ENCODE measurements at regions of chr13 and their contacts with region 1.

Region 1: DNA sequence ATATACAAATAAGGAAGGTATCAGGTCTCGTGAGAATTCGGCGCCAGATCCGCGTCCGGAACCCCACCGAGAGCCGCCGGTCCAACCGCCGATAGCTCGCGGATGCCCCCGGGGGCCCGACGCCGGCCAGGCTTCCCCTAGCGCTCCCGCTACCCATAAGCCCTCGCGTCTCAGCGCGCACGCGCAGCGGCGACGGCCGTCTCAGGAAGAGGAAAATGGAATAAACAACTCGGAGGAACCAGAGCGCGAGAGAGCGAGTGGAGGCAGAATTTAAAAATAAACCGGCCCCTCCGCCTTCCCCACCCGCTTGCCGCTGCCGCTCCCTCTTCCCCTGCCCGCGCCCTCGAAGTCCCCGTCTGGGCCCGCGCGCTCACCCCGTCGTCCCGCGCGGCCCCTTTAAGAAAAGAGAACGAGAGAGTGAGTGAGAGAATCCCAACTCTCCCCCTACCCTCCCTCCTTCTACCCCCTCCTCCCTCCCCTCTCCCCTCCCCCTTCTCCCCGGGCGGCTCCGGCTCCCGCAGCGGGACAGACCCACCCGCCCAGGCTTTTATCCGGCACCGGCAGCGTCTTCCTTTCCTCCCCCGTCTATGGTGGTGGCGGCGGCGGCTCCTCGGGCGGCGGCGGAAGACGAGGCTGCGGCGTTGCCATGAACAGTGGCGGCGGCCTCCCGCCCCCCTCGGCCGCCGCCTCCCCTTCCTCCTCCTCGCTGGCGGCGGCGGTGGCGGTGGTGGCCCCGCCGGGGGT is at the start of gene PAN3:
- DNase-seq: peak; percentile 69 to 89 (median 74)
- ATAC-seq: peak; percentile 73
- H3K4me3 ChIP-seq: peak within 1 kb of the TSS; percentile 96
- H3K27ac ChIP-seq: peak within 1 kb of the TSS; percentile 95
- H3K4me1 ChIP-seq: peaks cover 12 to 17% of the 10 kb centered on the region in 2 experiments; a peak in 4 of 5 replicates
- H3K27me3 ChIP-seq: no peaks in the 10 kb centered on the region
- CTCF ChIP-seq: 0 out of 6 replicates have a peak, but pooled peaks of 1 of the 3 experiments have one; percentile 5
- EP300 ChIP-seq: no peak
- POLR2A ChIP-seq: peak; percentile 80
- RAD21 ChIP-seq: no peak
- polyA plus RNA-seq, gene PAN3: 9.3 to 11.6 TPM

Region 2: DNA sequence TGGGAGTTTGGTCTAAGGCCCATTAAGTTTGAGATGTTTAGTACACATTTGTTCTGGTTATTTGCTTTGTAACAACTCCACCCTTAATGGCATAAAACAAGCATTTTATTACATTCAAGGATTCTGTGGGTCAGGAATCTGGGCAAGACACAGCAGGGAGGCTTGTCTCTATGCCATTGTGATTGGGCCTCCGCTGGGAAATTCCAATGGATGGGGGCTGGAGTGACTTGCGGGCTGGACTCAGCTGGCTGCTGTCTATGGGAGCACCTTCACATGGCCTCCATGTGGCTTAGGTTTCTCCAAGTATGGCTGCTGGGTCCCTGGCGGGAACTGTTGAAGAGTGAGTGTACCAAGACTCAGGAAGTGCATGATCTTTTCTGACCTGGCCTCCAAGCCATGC is 159.2 kb after region 1 on chr13:
- CTCF ChIA-PET with region 1: no interaction called
- POLR2A ChIA-PET with region 1: no interaction called
- in situ Hi-C with region 1: no loop called
- intact Hi-C with region 1: loop called (anchors 10 kb)
- DNase-seq: no peak
- ATAC-seq: no peak; the same call in 2 of the 3 replicates
- H3K4me3 ChIP-seq: no peak overlapping the region
- H3K27ac ChIP-seq: no peak overlapping the region
- H3K4me1 ChIP-seq: no peaks in the 10 kb centered on the region
- H3K27me3 ChIP-seq: no peaks in the 10 kb centered on the region
- CTCF ChIP-seq: no peak
- EP300 ChIP-seq: no peak
- POLR2A ChIP-seq: no peak
- RAD21 ChIP-seq: no peak

Measured in K562 (cell line).